ENCODE measurements at regions of chr19 and their contacts with region 1.

Region 1: GRCh38 chr19:48333467-48334384 is 8.4 kb downstream of the EMP3 start:
- DNase-seq: peak; percentile 87
- H3K4me3 ChIP-seq: peak overlapping the region; percentile 57
- H3K27ac ChIP-seq: peak overlapping the region; percentile 68
- H3K27me3 ChIP-seq: no peaks in the 10 kb centered on the region
- CTCF ChIP-seq: peak; percentile 80

Region 2: GRCh38 chr19:48321622-48322591 is 11.8 kb before region 1 on chr19:
- CTCF ChIA-PET with region 1: interaction called, 34 read pairs
- POLR2A ChIA-PET with region 1: interaction called, 32 read pairs
- DNase-seq: peak; percentile 97
- H3K4me3 ChIP-seq: peak overlapping the region; percentile 63
- H3K27ac ChIP-seq: peak overlapping the region; percentile 98
- H3K27me3 ChIP-seq: no peaks in the 10 kb centered on the region
- CTCF ChIP-seq: no peak